ENCODE measurements at regions of chr1 and their contacts with region 1.

Region 1: DNA sequence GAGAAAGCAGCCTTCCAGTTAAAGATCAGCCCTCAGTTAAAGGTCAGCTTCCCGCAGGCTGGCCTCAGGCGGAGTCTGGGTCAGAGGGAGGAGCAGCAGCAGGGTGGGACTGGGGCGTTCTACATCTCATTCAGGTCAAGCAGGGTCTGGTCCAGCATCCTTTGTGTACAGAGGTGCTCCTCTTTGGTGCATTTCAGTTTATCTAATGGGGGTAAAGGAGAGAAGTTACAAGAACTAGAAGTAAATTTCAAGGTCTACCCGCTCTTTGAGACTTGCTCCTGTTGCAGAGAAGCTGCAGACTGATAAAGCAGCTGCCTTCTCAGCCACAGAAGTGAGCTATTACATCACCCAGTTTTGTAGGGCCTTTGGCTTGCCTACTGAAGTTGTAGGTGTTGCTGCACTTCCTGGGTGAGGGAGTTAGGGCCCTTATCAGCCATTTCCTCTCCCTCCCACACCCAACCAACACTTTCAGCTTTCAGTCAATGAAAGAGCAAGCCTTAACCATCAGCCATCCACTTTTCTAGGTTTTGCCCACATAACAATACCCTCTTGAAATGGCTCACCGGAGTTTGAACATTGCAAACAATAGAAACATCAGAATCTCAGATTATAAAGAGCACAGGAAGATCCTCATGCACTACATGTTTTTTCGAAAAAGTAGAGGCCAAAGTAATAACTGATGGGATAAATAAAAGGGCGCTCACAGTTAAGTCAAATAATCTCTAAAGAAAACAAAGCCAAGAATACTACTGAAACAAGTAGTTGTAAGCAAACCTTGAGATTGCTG is 2.8 kb upstream of the NUP210L start:
- DNase-seq: peak; percentile 89
- ATAC-seq: peak; percentile 98
- H3K4me3 Mint-ChIP-seq: peak overlapping the region; percentile 66
- H3K27ac Mint-ChIP-seq: peak overlapping the region; percentile 94
- H3K4me1 Mint-ChIP-seq: peaks cover 73% of the 10 kb centered on the region
- H3K27me3 Mint-ChIP-seq: no peaks in the 10 kb centered on the region

Region 2: GRCh38 chr1:154145986-154146385 is 11.7 kb before region 1 on chr1:
- CTCF ChIA-PET with region 1: interaction called, 13 read pairs
- POLR2A ChIA-PET with region 1: interaction called, 5 read pairs
- DNase-seq: no peak
- ATAC-seq: no peak
- H3K4me3 Mint-ChIP-seq: no peak overlapping the region
- H3K27ac Mint-ChIP-seq: no peak overlapping the region
- H3K4me1 Mint-ChIP-seq: peaks cover 4% of the 10 kb centered on the region
- H3K27me3 Mint-ChIP-seq: no peaks in the 10 kb centered on the region

Region 3: DNA sequence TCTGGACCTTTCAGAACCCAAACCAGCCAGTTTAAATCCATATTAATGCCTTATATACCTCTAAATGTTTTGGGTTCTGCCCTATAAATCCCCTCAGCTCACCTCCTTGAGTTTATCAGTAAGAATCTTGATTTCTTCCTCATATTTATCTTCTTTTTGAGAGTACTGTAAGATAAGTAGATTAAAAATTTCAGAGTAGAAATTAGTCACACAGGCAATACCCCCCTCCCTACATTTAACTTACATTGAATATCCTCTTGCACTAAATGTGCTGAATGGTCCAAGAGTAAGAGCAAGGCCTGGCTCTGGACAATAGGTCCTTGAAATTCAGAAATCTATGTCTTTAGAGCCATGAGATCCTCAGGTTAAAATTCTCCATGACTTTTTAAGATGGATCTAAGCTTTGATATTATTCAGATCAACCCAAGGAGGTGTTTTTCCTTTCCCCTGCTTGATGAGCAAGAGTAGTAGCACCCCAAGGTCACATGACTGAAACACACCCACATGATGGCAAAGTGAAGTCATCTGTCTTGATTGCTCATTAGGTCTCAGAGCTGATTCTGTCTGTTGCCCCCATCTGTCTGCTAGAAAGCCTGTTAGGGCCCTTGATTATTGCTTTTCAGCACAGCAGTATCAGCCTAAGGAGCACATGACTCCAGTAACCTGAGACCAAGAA is 13.0 kb after region 1 on chr1:
- CTCF ChIA-PET with region 1: interaction called, 11 read pairs
- POLR2A ChIA-PET with region 1: interaction called, 84 read pairs
- DNase-seq: no peak
- ATAC-seq: peak; percentile 50
- H3K4me3 Mint-ChIP-seq: no peak overlapping the region
- H3K27ac Mint-ChIP-seq: peak overlapping the region; percentile 43
- H3K4me1 Mint-ChIP-seq: peaks cover 34% of the 10 kb centered on the region
- H3K27me3 Mint-ChIP-seq: no peaks in the 10 kb centered on the region

Region 4: DNA sequence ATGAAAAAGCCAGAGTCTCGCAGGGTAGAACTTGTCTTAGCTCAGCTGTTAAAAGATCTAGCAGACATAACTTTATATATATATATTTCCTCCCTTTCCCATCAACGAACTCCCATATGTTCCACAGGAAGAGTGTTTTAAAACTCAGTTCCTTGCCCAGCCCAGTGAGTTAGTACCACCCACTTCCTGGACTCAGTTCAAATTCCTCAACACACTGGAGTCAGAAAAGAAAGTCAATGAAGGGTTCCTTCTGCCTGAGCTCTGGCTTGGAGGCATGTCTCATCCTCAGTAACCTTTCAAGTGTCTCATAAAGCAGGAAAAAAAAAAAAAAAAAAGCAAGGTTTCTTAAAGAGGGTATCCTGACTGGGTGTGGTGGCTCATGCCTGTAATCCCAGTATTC is 18.6 kb after region 1 on chr1:
- CTCF ChIA-PET with region 1: interaction called, 23 read pairs
- POLR2A ChIA-PET with region 1: interaction called, 84 read pairs
- DNase-seq: no peak
- ATAC-seq: no peak
- H3K4me3 Mint-ChIP-seq: no peak overlapping the region
- H3K27ac Mint-ChIP-seq: peak overlapping the region; percentile 41
- H3K4me1 Mint-ChIP-seq: peaks cover 70% of the 10 kb centered on the region
- H3K27me3 Mint-ChIP-seq: no peaks in the 10 kb centered on the region

Region 5: DNA sequence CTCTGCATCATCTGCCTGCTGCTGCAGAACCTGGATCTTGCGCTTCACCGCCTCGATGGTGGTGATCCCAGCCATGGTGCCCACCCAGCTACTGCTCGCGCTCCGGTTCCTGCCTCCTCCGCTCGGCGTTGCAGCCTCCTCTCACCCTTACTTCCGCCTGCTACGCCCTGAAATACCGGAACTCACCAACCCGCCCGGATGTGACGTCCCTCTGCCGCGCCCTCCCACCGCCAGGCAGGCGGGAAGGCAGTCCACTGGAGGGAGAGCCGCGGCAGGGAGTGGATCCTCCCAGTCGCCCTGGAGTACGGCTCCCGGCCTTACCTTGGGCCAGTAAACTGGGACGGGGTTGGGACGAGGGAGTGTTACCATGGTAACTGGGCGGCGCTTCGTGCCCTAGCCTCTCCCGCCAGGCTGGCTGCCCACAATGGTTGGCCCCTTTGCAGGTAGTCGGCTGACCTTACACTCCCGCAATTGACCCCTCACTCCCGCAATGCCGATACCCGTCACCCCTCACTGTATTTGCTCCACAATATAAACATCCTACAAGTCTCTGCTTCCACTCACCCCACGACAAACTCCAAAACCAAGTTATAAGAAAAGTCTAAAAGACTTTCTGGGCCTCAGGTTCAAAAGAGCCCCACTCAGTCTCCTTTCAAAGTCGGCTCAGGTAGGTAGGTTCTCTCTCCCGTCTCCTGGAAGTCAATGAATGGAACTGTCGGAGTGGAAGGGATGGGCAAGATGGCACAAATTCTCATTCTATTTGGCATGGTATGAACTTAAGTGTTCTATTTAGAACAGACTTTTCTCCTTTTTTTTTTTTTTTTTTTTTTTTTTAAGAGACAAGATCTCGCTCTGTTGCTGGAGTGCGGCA is 25.6 kb after region 1 on chr1:
- CTCF ChIA-PET with region 1: interaction called, 23 read pairs
- POLR2A ChIA-PET with region 1: interaction called, 84 read pairs
- DNase-seq: peak; percentile 97
- ATAC-seq: peak; percentile 72
- H3K4me3 Mint-ChIP-seq: peak overlapping the region; percentile 99
- H3K27ac Mint-ChIP-seq: peak overlapping the region; percentile 100
- H3K4me1 Mint-ChIP-seq: peaks cover 43% of the 10 kb centered on the region
- H3K27me3 Mint-ChIP-seq: peaks cover 6% of the 10 kb centered on the region

Region 6: GRCh38 chr1:154533952-154534844 is 376.5 kb after region 1 on chr1:
- CTCF ChIA-PET with region 1: no interaction called
- POLR2A ChIA-PET with region 1: no interaction called
- DNase-seq: no peak
- ATAC-seq: no peak
- H3K4me3 Mint-ChIP-seq: no peak overlapping the region
- H3K27ac Mint-ChIP-seq: no peak overlapping the region
- H3K4me1 Mint-ChIP-seq: no peaks in the 10 kb centered on the region
- H3K27me3 Mint-ChIP-seq: peaks cover 12% of the 10 kb centered on the region